Vagina (tissue), 2 donors: ENCODE measurements at regions of chr1 and their contacts with region 1.

Region 1: DNA sequence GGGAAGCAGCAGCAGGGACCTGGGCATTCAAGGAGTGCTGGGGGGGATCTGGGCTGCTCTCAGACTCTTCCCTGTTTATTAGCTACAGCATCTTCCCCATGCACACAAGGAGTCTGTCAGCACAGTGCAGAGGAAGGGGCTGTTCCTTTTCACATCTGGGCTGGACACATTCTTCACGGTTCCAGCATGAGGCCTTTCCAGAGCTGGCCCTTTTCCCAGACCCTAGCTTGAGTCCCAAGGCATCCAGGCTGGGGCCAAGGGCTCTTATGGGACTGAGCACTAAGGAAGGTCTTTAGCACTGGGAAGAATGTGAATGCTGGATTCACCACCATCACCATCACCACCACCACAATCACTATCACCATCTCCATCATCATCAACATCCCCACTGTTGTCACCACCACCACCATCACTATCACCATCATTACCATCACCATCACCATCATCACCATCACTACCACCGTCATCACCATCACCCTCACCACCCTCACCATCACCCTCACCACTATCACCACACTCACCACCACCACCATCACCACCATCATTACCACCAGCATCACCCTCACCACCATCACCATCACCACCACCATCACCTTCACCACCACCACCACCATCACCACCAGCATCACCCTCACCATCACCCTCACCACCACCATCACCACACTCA is 28.4 kb downstream of the PARK7 start:
- DNase-seq: no peak
- H3K4me3 ChIP-seq: no peak overlapping the region
- H3K27ac ChIP-seq: no peak overlapping the region
- H3K4me1 ChIP-seq: no peaks in the 10 kb centered on the region
- H3K27me3 ChIP-seq: no peaks in the 10 kb centered on the region
- CTCF ChIP-seq: no peak
- POLR2A ChIP-seq: no peak

Region 2: GRCh38 chr1:8314346-8315280 is 324.7 kb after region 1 on chr1:
- intact Hi-C with region 1: loop called (anchors 10 kb)
- DNase-seq: no peak
- H3K4me3 ChIP-seq: no peak overlapping the region
- H3K27ac ChIP-seq: no peak overlapping the region
- H3K4me1 ChIP-seq: peaks cover 13% of the 10 kb centered on the region
- H3K27me3 ChIP-seq: no peaks in the 10 kb centered on the region
- CTCF ChIP-seq: peak; percentile 57 to 96 (median 86)
- POLR2A ChIP-seq: no peak